Heart right ventricle (tissue), 16 donors: ENCODE measurements at regions of chr12 and their contacts with region 1.

Region 1: DNA sequence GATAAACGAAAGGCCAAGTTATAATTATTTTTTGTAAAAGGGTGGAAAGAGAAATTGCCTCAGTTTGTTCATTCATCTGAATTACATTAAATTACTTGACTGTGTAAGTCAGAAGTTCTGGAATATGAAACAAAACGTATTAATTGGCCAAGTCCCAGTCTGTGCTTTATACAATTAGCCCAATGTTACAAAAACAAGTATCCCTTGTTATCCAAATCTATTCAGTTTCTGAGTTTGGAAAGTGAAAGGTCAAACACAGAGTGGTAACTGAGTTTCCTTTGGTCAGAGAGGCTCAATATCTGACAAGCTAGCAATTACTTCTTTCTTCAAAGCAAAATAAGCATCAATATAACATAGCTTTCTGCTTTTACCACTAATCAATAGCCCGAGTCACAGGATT is 62.6 kb downstream of the SPPL3 start:
- DNase-seq: no peak
- ATAC-seq: no peak
- H3K4me3 ChIP-seq: no peak overlapping the region
- H3K27ac ChIP-seq: no peak overlapping the region
- H3K4me1 ChIP-seq: peaks cover 2 to 68% (median 52%) of the 10 kb centered on the region in 9 donors
- H3K27me3 ChIP-seq: no peaks in the 10 kb centered on the region
- CTCF ChIP-seq: no peak

Region 2: GRCh38 chr12:120677765-120678473 is 163.6 kb before region 1 on chr12:
- intact Hi-C with region 1: no loop called
- DNase-seq: peak; percentile 45 to 59
- ATAC-seq: peak; percentile 68 to 95 (median 89)
- H3K4me3 ChIP-seq: no peak overlapping the region
- H3K27ac ChIP-seq: peak overlapping the region; percentile 51 to 85 (median 78)
- H3K4me1 ChIP-seq: peaks cover 0 to 26% (median 12%) of the 10 kb centered on the region in 9 donors
- H3K27me3 ChIP-seq: no peaks in the 10 kb centered on the region
- CTCF ChIP-seq: no peak

Region 3: DNA sequence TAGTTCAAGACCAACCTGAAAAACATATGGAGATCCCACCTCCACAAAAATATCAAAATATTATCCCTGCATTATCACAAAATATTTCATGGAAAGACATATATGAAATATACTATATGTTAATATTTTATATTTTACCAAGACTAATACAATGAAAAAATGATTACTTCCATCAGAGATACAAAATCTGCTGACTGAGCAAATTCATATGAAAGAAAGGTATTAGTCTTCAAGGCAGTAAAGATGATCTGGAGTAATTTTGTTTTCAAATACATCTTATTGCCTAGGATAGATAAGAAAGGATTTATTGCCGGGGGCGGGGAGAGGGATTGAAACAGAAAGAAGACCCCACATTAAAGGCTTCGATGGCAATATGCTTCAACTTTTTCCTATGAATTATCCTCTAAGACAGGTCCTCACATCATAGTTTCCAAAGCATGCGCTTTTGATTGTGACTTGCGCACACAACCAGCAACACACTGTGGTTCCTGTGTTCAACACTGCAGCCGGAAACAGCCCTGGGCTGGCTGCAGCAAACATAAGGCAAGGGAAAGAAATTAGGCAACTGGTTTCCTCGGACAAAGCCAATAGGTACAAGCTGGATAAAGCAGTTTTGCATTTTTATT is 20.5 kb before region 1 on chr12:
- intact Hi-C with region 1: loop called in 1 of 10 experiments (anchors 2 kb)
- DNase-seq: no peak
- ATAC-seq: no peak
- H3K4me3 ChIP-seq: no peak overlapping the region
- H3K27ac ChIP-seq: no peak overlapping the region
- H3K4me1 ChIP-seq: peaks cover 0 to 60% (median 18%) of the 10 kb centered on the region in 9 donors
- H3K27me3 ChIP-seq: no peaks in the 10 kb centered on the region
- CTCF ChIP-seq: no peak

Region 4: DNA sequence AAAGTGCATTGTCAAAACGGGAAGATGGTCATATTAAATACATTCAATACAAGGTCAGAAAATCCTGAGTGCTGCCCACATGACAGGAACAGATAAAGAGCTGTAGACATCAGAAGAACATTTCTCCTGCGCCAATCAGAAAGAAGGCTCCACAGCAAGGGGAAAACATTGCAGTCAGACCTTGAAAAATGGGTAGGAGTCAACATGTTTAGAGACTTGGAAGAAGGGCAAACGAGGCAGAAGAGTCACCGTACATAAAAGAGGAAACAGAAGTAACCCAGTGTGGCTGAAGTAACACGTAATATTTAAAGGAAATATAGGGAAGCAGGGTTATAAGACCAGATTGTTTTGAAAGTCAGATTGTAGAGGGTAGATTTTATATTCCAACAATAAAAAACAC is 50.7 kb after region 1 on chr12:
- intact Hi-C with region 1: no loop called
- DNase-seq: no peak
- ATAC-seq: peak in 4 of 8 donors; percentile 32 to 54 (median 36)
- H3K4me3 ChIP-seq: no peak overlapping the region
- H3K27ac ChIP-seq: peak overlapping the region in 7 of 10 donors; percentile 5 to 67 (median 34)
- H3K4me1 ChIP-seq: peaks cover 0 to 60% (median 39%) of the 10 kb centered on the region in 9 donors
- H3K27me3 ChIP-seq: no peaks in the 10 kb centered on the region
- CTCF ChIP-seq: no peak